Dorsolateral prefrontal cortex (tissue), 120 donors: ENCODE measurements at regions of chr3 and their contacts with region 1.

Region 1: DNA sequence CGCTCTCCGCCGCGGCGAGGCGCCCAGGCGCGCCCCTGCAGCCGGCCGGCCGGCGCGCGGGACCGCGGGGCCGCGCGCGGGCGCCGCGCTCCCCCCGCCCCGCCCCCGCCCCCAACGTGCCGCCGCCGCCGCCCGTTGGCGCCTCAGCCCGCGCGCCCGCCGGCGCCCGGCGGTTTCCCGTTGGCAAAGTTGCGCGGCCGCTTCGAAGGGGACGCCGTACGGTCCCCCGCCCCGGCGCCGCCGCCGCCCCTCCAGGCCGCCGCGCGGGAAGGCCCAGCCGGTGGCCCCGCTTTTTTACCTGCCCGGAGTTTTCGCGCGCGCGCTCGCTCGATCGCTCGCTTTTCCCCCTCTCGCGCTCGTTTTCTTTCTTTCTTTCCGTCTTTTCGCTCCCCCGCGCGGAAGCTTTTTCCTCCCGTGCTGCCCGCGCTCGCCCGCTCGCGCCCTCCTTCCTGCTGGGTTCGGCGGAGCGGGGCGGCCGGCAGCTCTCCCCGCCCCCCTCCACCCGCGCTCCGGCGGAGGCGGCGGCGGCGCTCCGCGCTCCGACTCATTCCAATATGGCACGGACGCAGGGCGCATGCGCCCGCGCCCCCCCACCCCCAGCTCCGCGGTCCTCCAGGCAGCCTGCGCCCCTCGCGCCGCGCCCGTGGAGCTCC is at the start of gene SFMBT1:
- DNase-seq: peak in 9 of 10 donors; percentile 33 to 70 (median 56)
- H3K4me3 ChIP-seq: peak within 1 kb of the TSS; percentile 66 to 95 (median 85)
- H3K27ac ChIP-seq: peak within 1 kb of the TSS; percentile 58 to 98 (median 94)
- H3K27me3 ChIP-seq: no peaks in the 10 kb centered on the region
- CTCF ChIP-seq: peak in 2 of 56 donors; percentile 5 to 9
- total RNA-seq, gene SFMBT1: 7.1 to 28.2 (median 13.3) TPM

Region 2: GRCh38 chr3:52705688-52706686 is 339.7 kb before region 1 on chr3 and contains the starts of genes GLT8D1 and SPCS1:
- intact Hi-C with region 1: loop called in 1 of 2 experiments (anchors 10 kb)
- DNase-seq: peak; percentile 77 to 93 (median 87)
- H3K4me3 ChIP-seq: peak within 1 kb of the TSS; percentile 48 to 100 (median 96)
- H3K27ac ChIP-seq: peak within 1 kb of the TSS; percentile 24 to 96 (median 90)
- H3K27me3 ChIP-seq: no peaks in the 10 kb centered on the region
- CTCF ChIP-seq: peak in 29 of 56 donors; percentile 2 to 59 (median 27)
- total RNA-seq, gene GLT8D1: 31.5 to 63.2 (median 47.2) TPM
- total RNA-seq, gene SPCS1: 50.3 to 110 (median 78.8) TPM

Region 3: GRCh38 chr3:52897130-52898122 is 148.2 kb before region 1 on chr3 and contains the start of gene STIMATE:
- intact Hi-C with region 1: loop called in 1 of 2 experiments (anchors 5 kb)
- DNase-seq: peak; percentile 80 to 95 (median 90)
- H3K4me3 ChIP-seq: peak within 1 kb of the TSS; percentile 65 to 99 (median 89)
- H3K27ac ChIP-seq: peak within 1 kb of the TSS in 50 of 59 donors; percentile 5 to 87 (median 68)
- H3K27me3 ChIP-seq: no peaks in the 10 kb centered on the region
- CTCF ChIP-seq: peak in 20 of 56 donors; percentile 6 to 54 (median 26)
- total RNA-seq, gene STIMATE: 9.2 to 40.0 (median 20.3) TPM